Activated B cell treated with CpG ODN at 0.5 μM for 24 hours (primary cell): ENCODE measurements at regions of chrX and their contacts with region 1.

Region 1: DNA sequence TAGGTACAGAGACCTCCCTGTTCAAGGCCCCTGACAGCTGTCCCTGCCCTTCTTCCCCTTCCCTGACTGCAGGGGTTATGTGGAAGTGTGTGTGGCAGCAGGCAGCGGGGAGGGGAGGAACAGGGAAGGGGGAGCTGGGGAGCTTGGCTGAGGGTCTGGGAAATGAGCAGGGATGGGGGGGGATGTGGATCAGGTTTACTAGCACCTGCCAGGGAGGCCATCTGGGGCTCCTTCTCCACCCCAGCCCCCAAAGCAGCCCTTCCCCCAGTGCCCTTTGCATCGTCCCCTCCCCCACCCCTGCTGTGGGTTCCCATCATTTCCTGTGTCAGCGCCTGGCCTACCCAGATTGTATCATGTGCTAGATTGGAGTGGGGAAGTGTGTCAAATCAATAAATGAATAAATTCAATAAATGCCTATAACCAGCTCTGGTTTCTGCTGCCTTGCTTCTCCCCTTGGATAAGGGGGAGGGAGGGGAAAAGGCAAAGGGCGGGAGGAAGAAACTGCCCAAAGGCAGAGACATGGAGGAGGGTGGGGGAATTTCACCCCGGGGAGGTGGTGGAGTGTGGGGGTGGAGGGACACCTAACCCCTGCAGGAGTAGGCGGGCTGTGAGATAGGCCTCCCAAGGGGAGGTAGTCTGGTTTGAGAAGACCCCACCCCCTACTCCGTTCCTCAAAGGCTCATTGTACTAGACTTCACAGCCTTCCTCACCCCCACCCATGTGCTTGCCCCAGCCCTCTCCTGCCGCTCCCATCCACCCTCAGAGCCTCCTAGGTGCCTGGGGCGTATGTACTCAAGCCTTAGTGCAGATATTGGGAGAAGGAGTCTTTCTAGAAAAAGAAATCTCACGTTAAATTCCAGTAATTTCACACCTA is 3.2 kb downstream of the CXorf65 start:
- DNase-seq: no peak
- ATAC-seq: peak; percentile 82
- H3K4me3 Mint-ChIP-seq: peak overlapping the region; percentile 62
- H3K27ac Mint-ChIP-seq: peak overlapping the region; percentile 83
- H3K4me1 Mint-ChIP-seq: peaks cover 56% of the 10 kb centered on the region
- H3K27me3 Mint-ChIP-seq: no peaks in the 10 kb centered on the region
- CTCF ChIP-seq: no peak

Region 2: GRCh38 chrX:71118032-71118984 is 15.0 kb after region 1 on chrX and contains the start of gene MED12:
- CTCF ChIA-PET with region 1: interaction called, 10 read pairs
- POLR2A ChIA-PET with region 1: interaction called, 89 read pairs
- intact Hi-C with region 1: loop called (anchors 1 kb)
- DNase-seq: peak; percentile 76
- ATAC-seq: peak; percentile 96
- H3K4me3 Mint-ChIP-seq: peak within 1 kb of the TSS; percentile 85
- H3K27ac Mint-ChIP-seq: peak within 1 kb of the TSS; percentile 89
- H3K4me1 Mint-ChIP-seq: peaks cover 16% of the 10 kb centered on the region
- H3K27me3 Mint-ChIP-seq: no peaks in the 10 kb centered on the region
- CTCF ChIP-seq: no peak
- total RNA-seq, gene MED12: 81.7 and 102 TPM in 2 replicates

Region 3: DNA sequence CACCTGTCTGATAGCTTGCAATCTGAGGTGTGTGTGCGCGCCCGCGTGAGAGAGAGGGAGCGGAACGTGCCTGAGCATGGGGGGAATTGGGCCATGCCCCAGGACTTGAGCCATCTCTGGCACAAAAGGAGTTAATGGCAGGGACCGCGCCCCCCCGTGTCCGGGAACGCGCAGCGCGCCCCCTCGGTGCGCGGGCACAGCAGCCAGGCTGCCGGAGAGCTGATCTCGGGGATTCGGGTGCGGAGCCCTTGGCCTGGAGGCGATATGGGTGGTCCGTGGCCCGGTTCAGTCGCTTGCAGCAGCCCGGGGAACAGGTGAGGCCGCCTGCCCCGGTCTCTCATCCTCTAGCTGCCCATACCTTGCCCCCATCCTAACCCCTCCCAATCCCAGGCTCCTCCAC is 41.3 kb after region 1 on chrX and contains the start of gene NLGN3:
- CTCF ChIA-PET with region 1: no interaction called
- POLR2A ChIA-PET with region 1: no interaction called
- intact Hi-C with region 1: no loop called
- DNase-seq: no peak
- ATAC-seq: no peak
- H3K4me3 Mint-ChIP-seq: peak within 1 kb of the TSS; percentile 29
- H3K27ac Mint-ChIP-seq: no peak within 1 kb of the TSS
- H3K4me1 Mint-ChIP-seq: peaks cover 14% of the 10 kb centered on the region
- H3K27me3 Mint-ChIP-seq: no peaks in the 10 kb centered on the region
- CTCF ChIP-seq: no peak
- total RNA-seq, gene NLGN3: 0.46 and 0.67 TPM in 2 replicates